Common myeloid progenitor, CD34-positive (primary cell): ENCODE measurements at regions of chr7 and their contacts with region 1.

Region 1: DNA sequence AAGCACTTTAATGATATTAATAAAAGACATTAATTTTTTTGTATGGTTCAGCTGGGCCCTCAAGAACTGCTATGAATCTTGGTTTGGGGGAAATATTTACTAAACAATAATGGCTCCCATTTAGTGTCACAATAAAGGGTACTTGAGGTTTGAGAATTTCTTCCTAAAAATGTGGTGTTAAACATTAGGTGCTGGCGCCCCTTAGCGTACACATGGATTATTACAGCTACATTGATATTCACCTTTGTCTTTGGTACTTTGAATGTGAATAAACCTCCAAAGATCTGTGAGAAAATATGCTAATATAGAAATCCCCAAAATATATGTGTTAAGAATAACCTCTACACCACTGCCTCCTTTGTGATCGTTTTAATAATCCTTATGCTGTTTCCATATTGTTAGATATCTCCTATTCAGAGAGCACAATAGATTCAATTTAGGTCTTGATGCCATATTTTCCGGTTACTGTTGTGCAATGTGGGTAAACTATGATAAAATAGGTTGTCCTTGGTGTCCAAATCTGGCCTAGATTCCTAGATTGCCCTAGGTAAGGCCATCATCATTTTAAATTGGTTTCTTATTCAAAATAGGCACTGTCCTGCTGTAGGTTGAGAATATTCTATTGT is 161.8 kb upstream of the CACNA2D1 start:
- DNase-seq: peak; percentile 50 to 72 (median 62)
- H3K4me3 ChIP-seq: no peak overlapping the region
- H3K27ac ChIP-seq: no peak overlapping the region
- H3K4me1 ChIP-seq: no peaks in the 10 kb centered on the region
- H3K27me3 ChIP-seq: no peaks in the 10 kb centered on the region

Region 2: DNA sequence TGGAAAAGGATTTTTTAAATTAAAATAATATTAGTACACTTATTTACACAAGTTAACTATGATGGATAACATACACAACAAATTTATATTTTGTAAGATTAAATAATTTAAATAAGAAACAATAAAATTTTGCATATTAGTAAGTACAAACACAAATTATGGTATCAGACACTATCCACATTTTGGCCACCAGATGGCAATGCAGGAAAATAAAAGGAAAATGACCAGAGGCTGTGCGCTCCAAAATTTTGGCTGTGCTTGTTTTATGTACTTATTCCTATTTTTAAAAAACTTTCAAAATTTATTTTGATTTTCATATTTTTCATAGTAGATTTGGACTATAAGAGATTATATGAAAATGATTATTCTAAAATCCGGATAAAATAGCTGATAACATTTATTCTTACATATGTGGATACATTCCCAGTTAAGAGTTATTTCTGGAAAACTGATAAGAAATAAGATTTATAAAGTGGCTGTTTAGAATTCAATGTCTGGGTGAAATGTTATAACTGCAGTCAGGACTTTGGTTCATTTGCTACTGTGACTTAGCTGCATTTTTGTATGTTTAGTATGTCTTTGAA is 560.8 kb before region 1 on chr7:
- CTCF ChIA-PET with region 1: interaction called, 20 read pairs
- POLR2A ChIA-PET with region 1: no interaction called
- DNase-seq: peak; percentile 50 to 74 (median 70)
- H3K4me3 ChIP-seq: no peak overlapping the region
- H3K27ac ChIP-seq: no peak overlapping the region
- H3K4me1 ChIP-seq: peaks cover 0 to 3% (median 0%) of the 10 kb centered on the region in 4 experiments
- H3K27me3 ChIP-seq: no peaks in the 10 kb centered on the region

Region 3: GRCh38 chr7:82234457-82235049 is 370.8 kb before region 1 on chr7:
- CTCF ChIA-PET with region 1: interaction called, 15 read pairs
- POLR2A ChIA-PET with region 1: no interaction called
- DNase-seq: peak; percentile 21 to 58 (median 54)
- H3K4me3 ChIP-seq: no peak overlapping the region
- H3K27ac ChIP-seq: no peak overlapping the region
- H3K4me1 ChIP-seq: no peaks in the 10 kb centered on the region
- H3K27me3 ChIP-seq: no peaks in the 10 kb centered on the region

Region 4: DNA sequence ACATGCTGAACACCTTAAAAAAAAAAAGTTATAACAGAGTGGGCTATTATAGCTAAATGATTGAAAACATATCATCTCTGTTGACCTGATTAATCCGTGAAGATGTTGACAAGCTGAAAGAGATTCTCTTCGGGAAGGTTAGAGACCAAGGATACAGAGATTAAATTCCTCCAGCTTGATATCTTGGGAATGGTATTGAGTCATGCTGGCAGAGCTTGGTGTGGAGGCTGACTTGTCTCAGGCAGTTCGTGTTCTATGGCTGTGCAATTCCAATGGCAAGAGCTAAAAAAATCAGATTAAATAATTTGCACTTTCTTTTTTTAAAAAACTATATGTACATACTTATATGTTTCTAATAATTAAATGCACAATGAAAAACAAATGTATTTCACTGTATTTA is 136.9 kb before region 1 on chr7:
- CTCF ChIA-PET with region 1: no interaction called
- POLR2A ChIA-PET with region 1: no interaction called
- DNase-seq: no peak
- H3K4me3 ChIP-seq: no peak overlapping the region
- H3K27ac ChIP-seq: no peak overlapping the region
- H3K4me1 ChIP-seq: no peaks in the 10 kb centered on the region
- H3K27me3 ChIP-seq: no peaks in the 10 kb centered on the region

Region 5: DNA sequence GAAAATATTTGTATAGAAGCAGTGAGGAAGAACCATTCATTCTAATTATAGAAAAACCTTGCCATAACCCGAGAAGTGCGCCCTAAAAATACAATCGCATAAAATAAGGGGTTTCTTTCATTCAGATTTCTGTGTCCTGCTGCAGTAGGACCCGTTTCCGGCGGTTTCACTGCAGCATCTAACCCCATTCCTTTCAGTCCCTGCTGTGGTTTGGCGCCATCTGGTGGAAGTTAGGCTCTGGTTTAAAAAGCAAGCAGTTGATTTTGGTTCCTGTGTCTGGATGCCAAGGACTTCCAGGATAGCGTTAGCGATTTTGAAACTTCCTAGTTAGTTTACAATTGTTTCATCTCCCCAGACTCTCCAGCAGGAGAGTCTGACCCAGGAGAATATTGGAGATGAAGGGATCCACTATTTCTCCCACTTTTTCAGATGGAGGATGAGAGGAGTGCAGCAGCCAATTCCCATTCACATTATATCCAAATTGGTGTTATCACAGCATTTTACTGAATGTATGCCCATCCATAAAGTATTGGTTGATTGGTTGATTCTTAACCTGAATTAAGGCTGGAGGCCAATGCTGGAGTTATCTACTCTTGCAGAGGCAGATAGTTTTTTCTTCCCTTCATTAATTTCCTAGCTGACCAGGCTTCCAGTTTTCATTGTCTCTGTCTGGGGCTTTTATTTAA is 33.0 kb before region 1 on chr7:
- CTCF ChIA-PET with region 1: interaction called, 13 read pairs
- POLR2A ChIA-PET with region 1: no interaction called
- DNase-seq: peak; percentile 78 to 84 (median 82)
- H3K4me3 ChIP-seq: peak overlapping the region in 2 of 7 experiments; percentile 6 to 43
- H3K27ac ChIP-seq: no peak overlapping the region
- H3K4me1 ChIP-seq: no peaks in the 10 kb centered on the region
- H3K27me3 ChIP-seq: no peaks in the 10 kb centered on the region

Region 6: DNA sequence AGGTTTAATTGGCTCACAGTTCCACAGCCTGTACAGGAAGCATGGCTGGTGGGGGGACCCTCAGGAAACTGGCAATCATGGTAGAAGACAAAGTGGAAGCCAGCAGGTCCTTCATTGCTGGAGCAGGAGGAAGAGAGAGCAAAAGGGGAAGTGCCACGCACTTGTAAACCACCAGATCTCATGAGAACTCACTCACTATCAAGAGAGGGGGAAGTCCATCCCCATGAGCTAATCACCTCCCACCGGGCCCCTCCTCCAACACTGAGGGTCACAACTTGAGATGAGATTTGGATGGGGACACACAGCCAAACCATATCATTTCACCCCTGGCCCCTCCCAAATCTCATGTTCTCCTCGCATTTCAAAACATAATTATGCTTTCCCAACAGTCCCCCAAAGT is 10.2 kb after region 1 on chr7:
- CTCF ChIA-PET with region 1: interaction called, 12 read pairs
- POLR2A ChIA-PET with region 1: no interaction called
- DNase-seq: peak; percentile 28 to 87 (median 80)
- H3K4me3 ChIP-seq: peak overlapping the region in 1 of 7 experiments; percentile 19
- H3K27ac ChIP-seq: no peak overlapping the region
- H3K4me1 ChIP-seq: peaks cover 0 to 15% (median 0%) of the 10 kb centered on the region in 4 experiments
- H3K27me3 ChIP-seq: no peaks in the 10 kb centered on the region